ENCODE measurements at regions of chr13 and their contacts with region 1.

Region 1: DNA sequence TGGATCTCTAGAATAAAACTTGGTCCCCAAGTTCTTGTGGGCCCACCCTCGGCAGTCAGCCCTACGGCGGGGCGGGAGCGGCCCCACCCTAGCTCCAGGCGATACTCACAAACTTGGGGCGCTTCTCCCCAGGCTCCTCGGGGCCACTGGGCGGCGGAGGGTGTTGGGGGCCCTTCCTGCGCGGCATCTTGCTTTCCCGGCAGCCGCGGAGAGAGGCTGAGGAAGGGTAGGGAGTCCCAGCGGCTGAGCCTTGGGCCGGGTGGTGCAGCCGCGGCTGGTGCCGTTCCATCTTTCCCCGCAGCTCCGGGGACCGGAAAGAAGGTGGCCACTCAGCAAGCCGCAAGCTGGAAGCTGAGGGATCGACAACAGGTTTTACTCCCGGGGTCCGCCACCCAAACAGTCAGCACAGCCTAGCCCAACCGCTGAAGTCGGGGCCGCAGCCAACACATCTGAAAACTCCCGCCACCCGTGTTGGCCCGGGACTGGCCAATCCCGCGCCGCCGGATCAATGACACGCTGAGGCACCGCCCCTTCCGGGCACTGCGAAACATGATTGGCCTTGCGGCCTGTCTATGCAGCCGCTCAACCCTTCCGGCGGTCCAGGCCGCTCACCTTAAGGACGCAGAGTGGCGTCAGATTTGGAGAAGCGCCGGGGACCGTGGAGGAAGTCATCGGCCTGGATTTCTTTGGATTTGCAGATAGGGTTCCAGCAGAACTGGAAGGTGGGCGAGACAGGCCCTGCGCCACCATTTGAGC is at the start of gene DIAPH3:
- DNase-seq: peak; percentile 93
- H3K4me3 Mint-ChIP-seq: peak within 1 kb of the TSS; percentile 96
- H3K27ac Mint-ChIP-seq: peak within 1 kb of the TSS; percentile 92
- H3K4me1 Mint-ChIP-seq: peaks cover 38% of the 10 kb centered on the region
- H3K27me3 Mint-ChIP-seq: no peaks in the 10 kb centered on the region
- total RNA-seq, gene DIAPH3: 30.1 and 30.8 TPM in 2 replicates

Region 2: GRCh38 chr13:60019119-60019993 is 144.3 kb before region 1 on chr13:
- intact Hi-C with region 1: loop called (anchors 5 kb)
- DNase-seq: no peak
- H3K4me3 Mint-ChIP-seq: peak overlapping the region; percentile 30
- H3K27ac Mint-ChIP-seq: no peak overlapping the region
- H3K4me1 Mint-ChIP-seq: peaks cover 49% of the 10 kb centered on the region
- H3K27me3 Mint-ChIP-seq: no peaks in the 10 kb centered on the region

Region 3: DNA sequence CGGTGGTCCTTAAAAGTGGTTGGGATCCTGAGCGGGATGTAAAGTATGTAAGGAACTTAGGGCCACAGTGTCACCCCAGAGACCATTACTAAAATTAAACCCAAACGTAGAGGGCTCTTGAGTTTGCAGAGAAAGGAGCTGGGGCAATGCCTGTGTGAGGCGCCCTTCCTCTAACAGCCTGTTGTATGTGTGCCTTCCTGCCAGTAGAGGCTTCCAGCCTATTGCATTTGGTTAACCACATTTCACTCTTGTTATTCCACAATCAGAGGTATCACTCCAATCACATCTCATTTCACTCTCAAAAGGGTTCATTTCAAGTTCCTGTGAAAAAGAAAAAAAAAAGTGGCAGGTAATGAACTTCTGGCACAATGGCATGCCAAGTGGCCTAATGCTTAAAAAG is 29.3 kb before region 1 on chr13:
- intact Hi-C with region 1: loop called (anchors 2 kb)
- DNase-seq: no peak
- H3K4me3 Mint-ChIP-seq: no peak overlapping the region
- H3K27ac Mint-ChIP-seq: no peak overlapping the region
- H3K4me1 Mint-ChIP-seq: peaks cover 26% of the 10 kb centered on the region
- H3K27me3 Mint-ChIP-seq: no peaks in the 10 kb centered on the region

Region 4: DNA sequence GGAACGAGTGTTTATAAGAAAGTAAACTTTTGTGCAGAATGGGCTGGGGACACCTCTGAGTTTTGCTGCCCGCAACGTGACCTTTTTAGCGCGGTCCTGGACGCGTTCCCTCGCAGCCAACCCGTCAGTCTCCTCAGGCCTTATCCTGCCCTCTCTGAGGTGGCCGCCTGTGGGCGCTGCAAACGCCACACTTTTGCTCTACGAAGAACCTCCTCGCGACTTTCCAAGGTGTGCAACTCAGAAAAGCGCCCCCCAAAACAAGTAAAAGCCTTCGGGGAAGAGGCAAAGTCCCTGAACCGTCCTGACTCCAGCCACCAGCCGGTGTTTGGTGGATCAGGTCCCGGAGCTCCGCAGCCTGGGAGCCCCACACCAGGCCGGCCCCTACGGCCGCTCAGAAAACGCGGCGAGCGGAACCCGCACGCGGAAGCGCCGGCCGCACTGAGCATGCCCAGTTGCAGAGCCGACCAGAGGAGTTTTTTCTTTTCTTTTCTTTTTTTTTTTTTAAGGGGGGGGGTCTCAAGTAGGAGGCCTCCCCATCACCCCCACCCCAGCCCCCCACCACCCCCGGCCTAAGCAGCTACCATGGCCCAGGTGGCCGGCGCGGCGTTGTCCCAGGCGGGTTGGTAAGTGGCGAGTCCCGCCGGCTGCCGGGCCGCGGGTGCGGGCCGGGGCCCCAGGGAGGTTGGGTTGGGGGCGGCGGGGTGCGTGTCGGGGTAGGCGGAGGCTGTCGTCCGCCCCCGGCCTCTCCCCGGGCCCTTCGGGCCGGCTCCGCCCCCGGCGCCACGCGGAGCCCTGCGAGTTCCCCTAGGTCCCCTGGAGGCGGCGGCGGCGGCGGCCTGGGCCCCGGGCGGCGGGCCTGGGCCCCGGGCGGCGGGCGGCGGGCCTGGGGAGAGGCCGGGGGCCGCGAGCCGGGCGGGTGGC is 233.4 kb after region 1 on chr13 and contains the start of gene TDRD3:
- intact Hi-C with region 1: loop called (anchors 1 kb)
- DNase-seq: peak; percentile 81
- H3K4me3 Mint-ChIP-seq: peak within 1 kb of the TSS; percentile 94
- H3K27ac Mint-ChIP-seq: peak within 1 kb of the TSS; percentile 97
- H3K4me1 Mint-ChIP-seq: peaks cover 28% of the 10 kb centered on the region
- H3K27me3 Mint-ChIP-seq: no peaks in the 10 kb centered on the region
- total RNA-seq, gene TDRD3: 19.0 and 22.0 TPM in 2 replicates

Measured in activated T-helper 2 cell treated with anti-CD3 and anti-CD28 coated beads, Interferon-gamma antibody, Interleukin-2, Interleukin-4, amounts not matched to agents 10 μg/mL and 5 μg/mL and 100 μg/mL, durations not matched to agents 14 hours and 24 hours and 36 hours (primary cell).